ENCODE measurements at regions of chr1 and their contacts with region 1.

Region 1: GRCh38 chr1:98468111-98468717 is 193.3 kb upstream of the SNX7 start:
- DNase-seq: peak; percentile 89
- ATAC-seq: peak; percentile 81
- H3K4me3 ChIP-seq: no peak overlapping the region
- H3K27ac ChIP-seq: peak overlapping the region; percentile 7; the same call in 1 of the 2 replicates
- H3K4me1 ChIP-seq: peaks cover 16% of the 10 kb centered on the region
- H3K27me3 ChIP-seq: no peaks in the 10 kb centered on the region
- CTCF ChIP-seq: peak; percentile 75

Region 2: GRCh38 chr1:97243973-97244560 is 1224.1 kb before region 1 on chr1:
- CTCF ChIA-PET with region 1: no interaction called
- POLR2A ChIA-PET with region 1: no interaction called
- intact Hi-C with region 1: loop called (anchors 5 kb)
- DNase-seq: peak; percentile 49
- ATAC-seq: no peak
- H3K4me3 ChIP-seq: no peak overlapping the region
- H3K27ac ChIP-seq: no peak overlapping the region
- H3K4me1 ChIP-seq: no peaks in the 10 kb centered on the region
- H3K27me3 ChIP-seq: no peaks in the 10 kb centered on the region
- CTCF ChIP-seq: peak; percentile 79

Region 3: GRCh38 chr1:97778718-97779117 is 689.5 kb before region 1 on chr1:
- CTCF ChIA-PET with region 1: no interaction called
- POLR2A ChIA-PET with region 1: no interaction called
- intact Hi-C with region 1: loop called (anchors 10 kb)
- DNase-seq: peak; percentile 20
- ATAC-seq: peak; percentile 53
- H3K4me3 ChIP-seq: no peak overlapping the region
- H3K27ac ChIP-seq: no peak overlapping the region
- H3K4me1 ChIP-seq: no peaks in the 10 kb centered on the region
- H3K27me3 ChIP-seq: no peaks in the 10 kb centered on the region
- CTCF ChIP-seq: peak; percentile 41; the same call in 1 of the 2 replicates

Region 4: DNA sequence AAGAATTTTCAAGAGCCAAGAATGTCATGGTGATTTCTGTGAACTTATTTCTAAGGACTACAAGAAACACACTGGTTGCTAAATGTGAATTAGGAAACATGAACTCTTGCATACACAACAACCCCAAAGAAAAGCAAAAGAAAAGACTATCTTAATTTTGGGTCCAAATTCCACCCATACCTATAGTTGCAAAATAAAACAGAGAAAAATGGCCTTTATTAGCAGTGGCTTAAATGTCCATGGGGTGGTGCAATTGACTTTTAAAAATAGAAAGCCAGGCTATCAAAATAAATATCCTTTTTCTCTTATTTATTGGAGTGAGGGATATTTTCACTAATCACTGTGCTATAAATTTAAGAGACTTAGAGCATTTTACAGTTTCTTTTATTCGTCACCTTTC is 466.4 kb before region 1 on chr1:
- CTCF ChIA-PET with region 1: no interaction called
- POLR2A ChIA-PET with region 1: no interaction called
- intact Hi-C with region 1: loop called (anchors 1 kb)
- DNase-seq: peak; percentile 60
- ATAC-seq: peak; percentile 26; the same call in 1 of the 2 replicates
- H3K4me3 ChIP-seq: no peak overlapping the region
- H3K27ac ChIP-seq: no peak overlapping the region
- H3K4me1 ChIP-seq: peaks cover 45% of the 10 kb centered on the region
- H3K27me3 ChIP-seq: no peaks in the 10 kb centered on the region
- CTCF ChIP-seq: peak; percentile 75

Region 5: GRCh38 chr1:98323906-98324358 is 144.3 kb before region 1 on chr1:
- CTCF ChIA-PET with region 1: no interaction called
- POLR2A ChIA-PET with region 1: no interaction called
- intact Hi-C with region 1: loop called (anchors 2 kb)
- DNase-seq: peak; percentile 98
- ATAC-seq: peak; percentile 68
- H3K4me3 ChIP-seq: peak overlapping the region; percentile 32
- H3K27ac ChIP-seq: peak overlapping the region; percentile 96
- H3K4me1 ChIP-seq: peaks cover 80% of the 10 kb centered on the region
- H3K27me3 ChIP-seq: no peaks in the 10 kb centered on the region
- CTCF ChIP-seq: no peak

Region 6: DNA sequence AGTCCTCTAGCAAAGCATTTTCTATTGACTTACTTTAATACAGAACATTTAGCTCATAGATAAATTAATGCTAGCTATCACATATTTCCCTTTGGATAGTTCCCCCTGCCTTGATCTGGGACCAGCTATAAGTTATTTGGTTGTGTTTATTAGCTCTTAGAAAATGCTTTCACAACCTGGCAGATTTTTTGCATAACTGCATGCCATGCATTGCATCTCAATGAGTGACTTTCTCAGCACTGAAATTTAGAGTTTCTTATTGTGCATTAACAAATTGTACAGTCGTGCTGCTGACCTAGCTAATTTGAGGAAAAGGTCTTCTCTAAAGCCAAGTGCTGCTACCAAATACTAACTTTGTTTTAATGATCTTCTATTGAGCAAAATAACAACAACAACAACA is 371.6 kb after region 1 on chr1:
- CTCF ChIA-PET with region 1: no interaction called
- POLR2A ChIA-PET with region 1: no interaction called
- intact Hi-C with region 1: no loop called
- DNase-seq: no peak
- ATAC-seq: no peak
- H3K4me3 ChIP-seq: no peak overlapping the region
- H3K27ac ChIP-seq: no peak overlapping the region
- H3K4me1 ChIP-seq: no peaks in the 10 kb centered on the region
- H3K27me3 ChIP-seq: no peaks in the 10 kb centered on the region
- CTCF ChIP-seq: no peak

Measured in PC-3 (cell line).